ENCODE measurements at regions of chr20 and their contacts with region 1.

Region 1: GRCh38 chr20:32789896-32790750 is 27.9 kb downstream of the DNMT3B start:
- DNase-seq: peak; percentile 50
- H3K4me3 ChIP-seq: no peak overlapping the region
- H3K27ac ChIP-seq: no peak overlapping the region
- H3K4me1 ChIP-seq: peaks cover 24% of the 10 kb centered on the region
- H3K27me3 ChIP-seq: no peaks in the 10 kb centered on the region
- CTCF ChIP-seq: peak; percentile 99 to 100

Region 2: DNA sequence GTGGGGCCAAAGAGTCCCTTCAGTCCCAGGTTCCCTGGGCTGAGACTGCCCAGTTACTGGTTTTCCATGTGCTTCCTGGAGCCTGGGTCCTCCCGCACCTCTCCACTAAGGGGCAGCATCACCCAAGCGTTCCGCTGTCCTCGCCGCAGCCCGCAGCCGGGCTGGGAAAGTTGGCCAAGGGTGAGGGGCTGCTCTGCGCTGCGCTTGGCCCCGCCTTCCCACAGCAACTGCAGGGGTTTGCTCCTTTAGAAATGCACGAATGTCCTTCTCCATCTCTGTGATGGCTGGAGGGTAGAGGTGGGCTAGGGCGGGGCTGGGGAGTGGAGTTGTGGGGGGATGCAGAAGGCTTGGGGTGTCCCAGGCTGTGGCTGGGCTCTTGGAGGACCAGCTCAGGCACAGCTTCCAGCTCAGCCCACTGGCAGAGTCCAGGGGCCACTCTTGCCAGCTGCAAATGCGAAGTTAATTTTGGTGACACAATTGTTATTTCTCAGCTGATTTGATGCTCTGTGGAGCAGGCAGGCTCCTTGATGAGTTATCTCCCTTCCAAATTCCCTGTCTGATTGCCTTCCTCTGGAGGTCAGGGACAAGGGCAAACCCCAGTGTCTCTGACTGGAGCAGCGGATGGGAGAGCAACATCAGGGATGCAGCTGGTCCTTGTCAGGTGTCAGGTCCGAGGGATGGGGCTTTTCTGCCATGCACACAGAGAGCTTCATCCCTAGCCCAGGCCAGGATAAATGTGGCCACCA is 268.2 kb before region 1 on chr20:
- CTCF ChIA-PET with region 1: no interaction called
- dilution Hi-C with region 1: loop called (anchors 10 kb)
- in situ Hi-C with region 1: no loop called
- intact Hi-C with region 1: no loop called
- DNase-seq: no peak
- H3K4me3 ChIP-seq: no peak overlapping the region
- H3K27ac ChIP-seq: no peak overlapping the region
- H3K4me1 ChIP-seq: peaks cover 9% of the 10 kb centered on the region
- H3K27me3 ChIP-seq: no peaks in the 10 kb centered on the region
- CTCF ChIP-seq: peak; percentile 78 to 87

Region 3: DNA sequence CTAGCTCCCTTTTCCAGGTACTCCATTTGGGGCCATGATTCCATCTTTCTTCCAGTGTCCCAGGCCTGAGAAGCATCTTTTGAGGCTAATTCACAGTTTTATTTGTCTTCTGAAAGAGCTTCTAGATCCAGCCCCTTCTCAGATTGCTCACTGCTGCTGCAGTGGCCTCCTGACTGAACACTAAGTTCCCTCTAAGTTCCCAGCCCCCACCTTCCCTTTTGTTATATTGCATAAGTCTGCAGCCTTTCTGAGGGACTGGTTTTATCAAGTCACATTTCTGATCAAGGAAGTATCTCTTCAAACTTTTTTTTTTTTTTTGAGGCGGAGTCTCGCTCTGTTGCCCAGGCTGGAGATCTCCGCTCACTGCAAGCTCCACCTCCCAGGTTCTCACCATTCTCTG is 40.3 kb after region 1 on chr20:
- CTCF ChIA-PET with region 1: interaction called, 13 read pairs
- dilution Hi-C with region 1: no loop called
- in situ Hi-C with region 1: no loop called
- intact Hi-C with region 1: no loop called
- DNase-seq: no peak
- H3K4me3 ChIP-seq: no peak overlapping the region
- H3K27ac ChIP-seq: no peak overlapping the region
- H3K4me1 ChIP-seq: no peaks in the 10 kb centered on the region
- H3K27me3 ChIP-seq: no peaks in the 10 kb centered on the region
- CTCF ChIP-seq: no peak

Region 4: GRCh38 chr20:32841174-32841573 is 51.1 kb after region 1 on chr20:
- CTCF ChIA-PET with region 1: no interaction called
- dilution Hi-C with region 1: no loop called
- in situ Hi-C with region 1: no loop called
- intact Hi-C with region 1: no loop called
- DNase-seq: no peak
- H3K4me3 ChIP-seq: no peak overlapping the region
- H3K27ac ChIP-seq: no peak overlapping the region
- H3K4me1 ChIP-seq: no peaks in the 10 kb centered on the region
- H3K27me3 ChIP-seq: no peaks in the 10 kb centered on the region
- CTCF ChIP-seq: no peak

Region 5: GRCh38 chr20:32894026-32894483 is 103.9 kb after region 1 on chr20:
- CTCF ChIA-PET with region 1: no interaction called
- dilution Hi-C with region 1: no loop called
- in situ Hi-C with region 1: no loop called
- intact Hi-C with region 1: loop called (anchors 1 kb)
- DNase-seq: no peak
- H3K4me3 ChIP-seq: no peak overlapping the region
- H3K27ac ChIP-seq: no peak overlapping the region
- H3K4me1 ChIP-seq: peaks cover 3% of the 10 kb centered on the region
- H3K27me3 ChIP-seq: no peaks in the 10 kb centered on the region
- CTCF ChIP-seq: peak; percentile 47 to 71

Region 6: GRCh38 chr20:33076662-33077372 is 286.7 kb after region 1 on chr20:
- CTCF ChIA-PET with region 1: no interaction called
- dilution Hi-C with region 1: no loop called
- in situ Hi-C with region 1: loop called in 1 of 2 experiments (anchors 25 kb)
- intact Hi-C with region 1: no loop called
- DNase-seq: peak; percentile 17
- H3K4me3 ChIP-seq: no peak overlapping the region
- H3K27ac ChIP-seq: no peak overlapping the region
- H3K4me1 ChIP-seq: no peaks in the 10 kb centered on the region
- H3K27me3 ChIP-seq: no peaks in the 10 kb centered on the region
- CTCF ChIP-seq: peak; percentile 23 to 46

Region 7: DNA sequence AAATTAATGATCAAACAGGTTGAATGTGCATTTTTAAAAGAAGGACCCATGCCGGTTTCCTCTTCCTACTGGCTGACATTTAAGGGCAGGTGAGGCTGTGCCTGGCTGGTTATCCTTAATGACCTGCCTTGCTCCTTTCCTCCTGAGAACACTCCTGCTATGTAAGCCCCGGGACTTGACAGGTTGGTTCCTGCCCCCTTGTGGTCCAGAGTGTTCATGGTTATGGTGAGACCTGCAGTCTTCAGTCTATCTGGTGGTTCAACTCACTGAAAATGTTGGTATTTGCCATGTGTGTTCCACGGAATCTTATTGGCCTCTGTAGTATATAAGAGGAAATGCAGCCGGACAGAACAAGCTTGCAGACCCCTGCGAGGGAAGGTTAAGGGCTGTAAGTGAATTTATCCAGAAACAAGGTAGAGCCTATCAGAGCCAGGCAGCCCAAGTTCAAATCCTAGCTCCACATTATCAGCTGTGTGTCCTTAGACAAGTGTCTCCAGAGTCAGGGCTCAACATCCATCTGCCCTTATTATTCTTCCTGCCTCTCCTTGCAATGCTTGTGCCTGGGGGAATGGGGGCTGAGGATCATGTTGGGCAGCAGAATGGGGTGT is 421.8 kb after region 1 on chr20:
- CTCF ChIA-PET with region 1: no interaction called
- dilution Hi-C with region 1: no loop called
- in situ Hi-C with region 1: no loop called
- intact Hi-C with region 1: loop called (anchors 5 kb)
- DNase-seq: peak; percentile 44
- H3K4me3 ChIP-seq: no peak overlapping the region
- H3K27ac ChIP-seq: no peak overlapping the region
- H3K4me1 ChIP-seq: no peaks in the 10 kb centered on the region
- H3K27me3 ChIP-seq: no peaks in the 10 kb centered on the region
- CTCF ChIP-seq: peak; percentile 45 to 62

Measured in mammary epithelial cell (primary cell).